ENCODE measurements at regions of chr5 and their contacts with region 1.

Region 1: GRCh38 chr5:149828161-149828884 is 98.2 kb downstream of the PPARGC1B start:
- DNase-seq: peak; percentile 83
- H3K4me3 ChIP-seq: peak overlapping the region in 1 of 2 experiments; percentile 23; a peak in 1 of 4 replicates
- H3K27ac ChIP-seq: no peak overlapping the region
- H3K4me1 ChIP-seq: no peaks in the 10 kb centered on the region; a peak in 1 of 4 replicates
- H3K27me3 ChIP-seq: no peaks in the 10 kb centered on the region
- CTCF ChIP-seq: peak; percentile 91
- EP300 ChIP-seq: no peak
- RAD21 ChIP-seq: peak; percentile 95

Region 2: GRCh38 chr5:149636851-149637246 is 191.5 kb before region 1 on chr5:
- CTCF ChIA-PET with region 1: interaction called, 730 read pairs
- POLR2A ChIA-PET with region 1: no interaction called
- DNase-seq: peak; percentile 81
- H3K4me3 ChIP-seq: peak overlapping the region in 1 of 2 experiments; percentile 43; a peak in 1 of 4 replicates
- H3K27ac ChIP-seq: no peak overlapping the region
- H3K4me1 ChIP-seq: peaks cover 0 to 12% of the 10 kb centered on the region in 2 experiments; a peak in 1 of 4 replicates
- H3K27me3 ChIP-seq: no peaks in the 10 kb centered on the region
- CTCF ChIP-seq: peak; percentile 84
- EP300 ChIP-seq: no peak
- RAD21 ChIP-seq: peak; percentile 99

Region 3: GRCh38 chr5:149667084-149667828 is 161.1 kb before region 1 on chr5:
- CTCF ChIA-PET with region 1: interaction called, 48 read pairs
- POLR2A ChIA-PET with region 1: no interaction called
- DNase-seq: peak; percentile 69
- H3K4me3 ChIP-seq: no peak overlapping the region
- H3K27ac ChIP-seq: no peak overlapping the region
- H3K4me1 ChIP-seq: no peaks in the 10 kb centered on the region; a peak in 1 of 4 replicates
- H3K27me3 ChIP-seq: no peaks in the 10 kb centered on the region
- CTCF ChIP-seq: peak; percentile 86
- EP300 ChIP-seq: no peak
- RAD21 ChIP-seq: peak; percentile 55

Region 4: DNA sequence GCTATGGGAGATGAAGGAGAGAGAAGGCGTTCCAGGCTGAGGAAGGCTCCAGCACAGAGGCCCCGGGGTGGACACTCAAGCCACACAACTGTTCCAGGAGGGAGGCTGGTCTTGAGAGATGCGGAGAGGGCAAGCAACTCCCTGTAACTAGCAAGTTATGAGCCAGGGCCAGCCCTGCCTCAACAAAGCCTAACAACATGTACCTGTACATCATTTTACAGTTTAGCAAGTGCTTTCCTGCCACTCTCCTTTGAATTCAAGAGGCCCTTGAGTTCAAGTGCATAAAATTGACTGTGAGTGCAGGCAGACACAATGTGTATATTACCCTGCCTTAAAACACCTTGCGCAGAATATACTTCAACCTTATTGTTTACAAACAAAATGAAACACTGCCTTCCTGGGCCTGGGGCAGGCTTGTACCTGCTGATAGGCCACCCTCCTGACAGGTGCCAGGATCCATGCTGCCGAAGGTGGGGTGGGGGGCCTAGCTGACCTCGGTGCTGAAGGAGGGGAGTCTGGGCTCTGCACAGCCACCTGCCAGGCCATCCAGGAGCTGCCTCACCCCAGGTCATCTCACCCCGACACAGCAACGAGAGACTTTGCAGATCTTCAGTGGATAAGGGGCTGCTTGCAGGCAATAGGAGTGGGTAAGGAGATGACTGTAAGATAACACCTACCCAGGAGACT is 18.2 kb before region 1 on chr5:
- CTCF ChIA-PET with region 1: interaction called, 20 read pairs
- POLR2A ChIA-PET with region 1: no interaction called
- DNase-seq: no peak
- H3K4me3 ChIP-seq: no peak overlapping the region
- H3K27ac ChIP-seq: no peak overlapping the region
- H3K4me1 ChIP-seq: peaks cover 6 to 13% of the 10 kb centered on the region in 2 experiments; a peak in 2 of 4 replicates
- H3K27me3 ChIP-seq: no peaks in the 10 kb centered on the region
- CTCF ChIP-seq: no peak
- EP300 ChIP-seq: no peak
- RAD21 ChIP-seq: no peak

Region 5: GRCh38 chr5:149817539-149818060 is 10.7 kb before region 1 on chr5:
- CTCF ChIA-PET with region 1: interaction called, 41 read pairs
- POLR2A ChIA-PET with region 1: no interaction called
- DNase-seq: no peak
- H3K4me3 ChIP-seq: no peak overlapping the region
- H3K27ac ChIP-seq: no peak overlapping the region
- H3K4me1 ChIP-seq: no peaks in the 10 kb centered on the region; a peak in 1 of 4 replicates
- H3K27me3 ChIP-seq: no peaks in the 10 kb centered on the region
- CTCF ChIP-seq: no peak
- EP300 ChIP-seq: no peak
- RAD21 ChIP-seq: no peak

Region 6: DNA sequence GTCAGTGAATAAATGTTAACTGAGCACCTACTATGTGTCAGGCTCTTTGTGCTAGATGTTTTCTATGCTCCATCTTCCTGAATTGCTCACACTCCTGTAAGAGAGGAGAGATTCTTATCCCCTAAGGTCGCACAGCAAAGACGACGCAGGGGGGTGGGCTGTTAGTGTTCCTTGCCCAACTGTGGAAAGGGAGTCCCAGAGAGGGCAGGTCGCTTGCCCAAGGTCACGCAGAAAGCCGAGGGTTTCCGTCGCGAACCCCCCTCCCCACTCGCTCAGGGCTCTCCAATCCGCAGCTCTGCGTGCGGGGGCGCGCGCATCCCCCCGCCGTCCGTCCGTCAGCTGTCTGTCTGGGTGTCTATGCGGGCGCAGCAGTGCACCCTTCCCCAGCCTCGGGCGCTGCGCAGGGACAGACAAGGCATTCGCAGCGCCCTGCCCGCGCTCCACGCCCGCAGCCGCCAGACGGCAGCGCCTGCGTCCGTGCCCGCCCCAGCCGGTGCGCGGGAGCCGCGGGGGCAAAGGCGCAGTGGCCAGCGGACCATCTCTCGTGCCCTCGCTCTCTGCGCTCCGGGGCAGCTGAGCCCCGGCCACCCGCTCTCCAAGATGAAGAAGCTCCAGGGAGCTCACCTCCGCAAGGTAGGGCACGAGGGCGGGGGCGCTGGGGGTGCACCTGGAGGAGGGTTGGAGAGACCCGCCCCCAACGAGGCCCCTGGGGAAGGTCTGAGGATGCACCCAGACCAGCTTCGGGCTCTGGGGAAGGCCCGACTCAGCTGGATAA is 361.6 kb after region 1 on chr5 and contains the start of gene SLC6A7:
- CTCF ChIA-PET with region 1: no interaction called
- POLR2A ChIA-PET with region 1: no interaction called
- DNase-seq: peak; percentile 84
- H3K4me3 ChIP-seq: peak within 1 kb of the TSS in 1 of 2 experiments; percentile 30; a peak in 2 of 4 replicates
- H3K27ac ChIP-seq: no peak within 1 kb of the TSS
- H3K4me1 ChIP-seq: peaks cover 0 to 4% of the 10 kb centered on the region in 2 experiments; a peak in 1 of 4 replicates
- H3K27me3 ChIP-seq: peaks cover 39% of the 10 kb centered on the region
- CTCF ChIP-seq: no peak
- EP300 ChIP-seq: no peak
- RAD21 ChIP-seq: no peak
- polyA plus RNA-seq, gene SLC6A7: not detected in 2 replicates

Region 7: DNA sequence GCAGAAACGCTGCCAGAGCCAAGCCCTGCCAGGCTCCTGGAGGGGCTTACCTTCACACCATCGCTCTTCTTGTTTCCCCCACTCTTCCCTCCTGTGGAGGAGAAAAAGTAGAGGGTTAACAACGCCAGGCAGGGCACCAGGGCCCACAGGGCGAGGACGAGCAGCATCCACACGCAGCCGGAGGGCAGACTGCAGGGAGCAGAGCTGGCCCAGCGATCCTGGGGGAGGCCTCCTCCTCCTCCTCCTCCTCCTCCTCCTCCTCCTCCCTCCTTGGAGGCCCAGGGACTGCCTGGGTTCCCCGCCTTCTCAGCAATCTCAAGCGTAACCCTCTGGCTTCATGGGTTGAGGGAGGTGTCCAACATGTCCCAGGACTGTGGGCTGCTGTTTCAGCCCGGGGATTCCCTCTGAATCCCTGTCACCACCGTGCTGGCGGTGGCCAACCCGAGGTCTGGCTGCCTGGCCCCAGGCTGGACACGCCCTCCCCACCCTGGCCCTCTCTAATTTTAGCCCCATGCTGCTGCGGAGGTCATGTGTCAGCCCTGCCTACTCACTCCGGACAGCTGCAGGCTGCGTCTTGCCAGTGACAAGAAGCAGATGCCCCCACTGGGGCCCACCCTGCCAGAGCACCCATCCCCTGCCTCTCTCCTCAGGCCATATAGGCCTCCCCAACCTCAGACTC is 416.9 kb after region 1 on chr5:
- CTCF ChIA-PET with region 1: no interaction called
- POLR2A ChIA-PET with region 1: no interaction called
- DNase-seq: peak; percentile 92
- H3K4me3 ChIP-seq: no peak overlapping the region
- H3K27ac ChIP-seq: no peak overlapping the region
- H3K4me1 ChIP-seq: peaks cover 0 to 19% of the 10 kb centered on the region in 2 experiments; a peak in 1 of 4 replicates
- H3K27me3 ChIP-seq: no peaks in the 10 kb centered on the region
- CTCF ChIP-seq: no peak
- EP300 ChIP-seq: peak in 1 of 2 experiments; percentile 84; a peak in 2 of 4 replicates
- RAD21 ChIP-seq: no peak; the same call in none of the 2 replicates